ENCODE measurements at regions of chr5 and their contacts with region 1.

Region 1: GRCh38 chr5:77168161-77168875 is 42.2 kb upstream of the PDE8B start:
- DNase-seq: peak; percentile 44 to 74
- H3K4me3 ChIP-seq: peak overlapping the region in 1 of 3 donors; percentile 46
- H3K27ac ChIP-seq: peak overlapping the region; percentile 52 to 67
- H3K4me1 ChIP-seq: no peaks in the 10 kb centered on the region
- H3K27me3 ChIP-seq: no peaks in the 10 kb centered on the region
- CTCF ChIP-seq: no peak
- POLR2A ChIP-seq: no peak

Region 2: DNA sequence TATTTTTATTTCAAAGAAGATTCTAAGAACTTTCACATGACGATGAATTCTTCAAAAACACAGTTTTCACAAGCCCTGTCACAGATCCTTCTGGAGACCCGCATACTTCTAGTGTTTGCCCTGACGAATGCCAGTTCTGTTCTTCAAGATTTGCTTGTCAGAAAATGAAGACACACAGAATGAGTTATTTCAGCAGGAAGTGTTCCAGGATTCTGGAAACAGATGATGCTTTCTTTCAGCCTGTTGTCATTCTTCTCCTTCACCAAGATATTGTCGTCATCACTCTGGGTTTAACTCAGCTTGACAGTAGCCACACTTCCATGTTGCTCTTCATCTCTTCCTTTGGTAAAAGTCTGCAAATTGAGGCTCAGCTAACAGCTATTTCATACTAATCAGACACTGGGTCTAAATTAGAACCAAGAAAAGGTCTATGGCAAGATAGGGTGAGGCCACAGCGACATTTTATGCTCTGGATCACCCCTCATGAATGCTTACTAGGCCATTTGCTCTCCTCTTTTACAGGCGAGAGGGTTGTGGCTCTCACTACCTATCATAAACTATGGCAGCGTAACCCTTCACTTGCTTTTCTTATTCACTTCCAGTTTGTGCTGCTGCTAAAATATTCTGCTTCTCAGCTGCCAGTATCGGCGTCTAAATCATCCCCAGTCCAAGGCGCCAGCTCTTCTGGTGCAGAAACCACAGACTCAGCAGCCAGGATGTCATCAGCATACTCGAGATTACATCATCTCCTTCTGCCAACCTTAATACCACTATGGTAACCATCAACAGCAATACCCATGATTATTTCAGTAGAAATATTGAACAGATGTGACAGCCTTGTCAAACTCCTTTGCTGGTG is 767.4 kb after region 1 on chr5:
- intact Hi-C with region 1: loop called (anchors 5 kb)
- DNase-seq: no peak
- H3K4me3 ChIP-seq: no peak overlapping the region
- H3K27ac ChIP-seq: no peak overlapping the region
- H3K4me1 ChIP-seq: no peaks in the 10 kb centered on the region
- H3K27me3 ChIP-seq: no peaks in the 10 kb centered on the region
- CTCF ChIP-seq: no peak
- POLR2A ChIP-seq: no peak

Region 3: GRCh38 chr5:78483809-78484521 is 1315.6 kb after region 1 on chr5:
- intact Hi-C with region 1: no loop called
- DNase-seq: no peak
- H3K4me3 ChIP-seq: no peak overlapping the region
- H3K27ac ChIP-seq: peak overlapping the region; percentile 17 to 45
- H3K4me1 ChIP-seq: no peaks in the 10 kb centered on the region
- H3K27me3 ChIP-seq: no peaks in the 10 kb centered on the region
- CTCF ChIP-seq: no peak
- POLR2A ChIP-seq: no peak

Measured in breast epithelium (tissue), 4 donors.